Activated T-helper 1 cell treated with anti-CD3 and anti-CD28 coated beads, Interleukin-12 subunit alpha, Interleukin-12 subunit beta, Interleukin-2, Interleukin-4 antibody, amounts not matched to agents 30 ng/mL and 10 ng/mL and 1 ng/mL, durations not matched to agents 14 hours and 24 hours and 36 hours (primary cell): ENCODE measurements at regions of chr6 and their contacts with region 1.

Region 1: DNA sequence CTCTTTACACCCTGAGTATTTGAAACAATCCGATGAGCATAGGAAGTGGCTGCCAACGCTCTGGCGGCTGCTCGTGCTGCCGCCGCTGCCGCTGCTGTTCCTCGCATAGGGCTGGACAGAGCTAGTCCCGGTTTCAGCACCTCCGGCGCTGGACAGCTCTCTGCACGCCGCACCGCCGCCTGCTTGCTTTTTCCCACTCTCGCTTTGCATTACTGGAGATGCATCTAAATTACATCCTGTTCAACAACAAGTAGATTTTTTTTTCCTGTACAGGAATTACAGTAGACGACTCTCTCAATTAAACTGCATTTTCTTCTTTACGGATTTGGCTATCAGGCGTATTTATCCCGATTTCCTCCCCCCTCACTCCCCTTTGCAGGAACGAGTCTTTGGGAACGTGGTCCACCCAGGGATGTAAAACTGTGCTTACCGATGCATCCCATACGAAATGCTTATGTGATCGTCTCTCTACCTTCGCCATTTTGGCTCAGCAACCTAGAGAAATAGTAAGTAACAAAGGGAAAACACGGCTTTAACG is 563.8 kb downstream of the LMBRD1 start:
- DNase-seq: peak; percentile 44
- H3K4me3 Mint-ChIP-seq: no peak overlapping the region
- H3K27ac Mint-ChIP-seq: no peak overlapping the region
- H3K4me1 Mint-ChIP-seq: no peaks in the 10 kb centered on the region
- H3K27me3 Mint-ChIP-seq: peaks cover 4% of the 10 kb centered on the region

Region 2: GRCh38 chr6:68634726-68635411 is 598.1 kb before region 1 on chr6 and contains the start of gene ADGRB3:
- intact Hi-C with region 1: loop called (anchors 10 kb)
- DNase-seq: peak; percentile 11
- H3K4me3 Mint-ChIP-seq: peak within 1 kb of the TSS; percentile 80
- H3K27ac Mint-ChIP-seq: peak within 1 kb of the TSS; percentile 31
- H3K4me1 Mint-ChIP-seq: peaks cover 25% of the 10 kb centered on the region
- H3K27me3 Mint-ChIP-seq: peaks cover 49% of the 10 kb centered on the region
- total RNA-seq, gene ADGRB3: not detected in 2 replicates

Region 3: DNA sequence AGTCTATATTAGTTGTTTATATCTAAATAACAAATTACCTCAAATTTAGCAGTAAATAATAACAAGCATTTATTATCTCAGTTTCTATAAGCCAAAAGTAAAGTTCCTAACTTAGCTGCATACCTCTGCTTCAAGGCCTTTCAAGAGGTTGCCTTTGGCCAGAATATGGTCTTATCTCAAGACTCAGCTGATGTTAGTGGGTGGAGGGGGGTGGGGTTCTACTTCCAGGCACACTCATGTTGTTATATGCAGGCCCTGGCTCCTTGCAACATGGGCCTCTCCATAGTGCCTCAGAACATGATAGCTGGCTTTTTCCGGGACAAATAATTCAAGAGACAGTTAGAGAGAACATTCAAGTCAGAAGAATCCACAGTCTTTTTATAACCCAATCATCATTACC is 331.9 kb before region 1 on chr6:
- intact Hi-C with region 1: no loop called
- DNase-seq: no peak
- H3K4me3 Mint-ChIP-seq: no peak overlapping the region
- H3K27ac Mint-ChIP-seq: no peak overlapping the region
- H3K4me1 Mint-ChIP-seq: no peaks in the 10 kb centered on the region
- H3K27me3 Mint-ChIP-seq: no peaks in the 10 kb centered on the region